ENCODE measurements at regions of chr1 and their contacts with region 1.

Region 1: DNA sequence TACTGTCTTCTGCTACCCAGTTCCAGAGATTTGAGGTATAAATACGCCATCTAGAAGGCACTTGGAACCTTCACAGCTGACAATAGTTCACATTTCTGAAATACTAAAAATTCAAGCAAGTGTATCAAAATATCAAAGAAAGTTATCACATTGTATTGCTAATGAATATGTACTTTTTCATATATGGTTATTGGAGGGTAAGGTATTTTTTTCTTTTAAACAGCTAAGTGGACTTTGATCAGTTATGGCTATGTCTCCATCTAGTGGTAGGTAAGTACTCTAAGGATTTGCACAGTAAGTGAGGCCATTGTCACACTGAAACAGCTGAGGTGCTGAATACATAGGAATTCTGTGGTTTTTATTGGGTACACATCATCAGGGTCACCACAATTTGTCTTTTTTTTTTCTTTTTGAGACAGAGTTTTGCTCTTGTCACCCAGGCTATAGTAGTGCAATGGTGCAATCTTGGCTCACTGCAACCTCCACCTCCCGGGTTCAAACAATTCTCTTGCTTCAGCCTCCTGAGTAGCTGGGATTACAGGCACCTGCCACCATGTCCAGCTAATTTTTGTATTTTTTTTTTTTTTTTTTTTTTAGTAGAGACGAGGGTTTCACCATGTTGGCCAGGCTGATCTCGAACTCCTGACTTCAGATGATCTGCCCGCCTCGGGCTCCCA is 49.1 kb upstream of the CR2 start:
- DNase-seq: no peak
- H3K4me3 Mint-ChIP-seq: no peak overlapping the region
- H3K27ac Mint-ChIP-seq: no peak overlapping the region
- H3K4me1 Mint-ChIP-seq: peaks cover 13% of the 10 kb centered on the region
- H3K27me3 Mint-ChIP-seq: no peaks in the 10 kb centered on the region

Region 2: DNA sequence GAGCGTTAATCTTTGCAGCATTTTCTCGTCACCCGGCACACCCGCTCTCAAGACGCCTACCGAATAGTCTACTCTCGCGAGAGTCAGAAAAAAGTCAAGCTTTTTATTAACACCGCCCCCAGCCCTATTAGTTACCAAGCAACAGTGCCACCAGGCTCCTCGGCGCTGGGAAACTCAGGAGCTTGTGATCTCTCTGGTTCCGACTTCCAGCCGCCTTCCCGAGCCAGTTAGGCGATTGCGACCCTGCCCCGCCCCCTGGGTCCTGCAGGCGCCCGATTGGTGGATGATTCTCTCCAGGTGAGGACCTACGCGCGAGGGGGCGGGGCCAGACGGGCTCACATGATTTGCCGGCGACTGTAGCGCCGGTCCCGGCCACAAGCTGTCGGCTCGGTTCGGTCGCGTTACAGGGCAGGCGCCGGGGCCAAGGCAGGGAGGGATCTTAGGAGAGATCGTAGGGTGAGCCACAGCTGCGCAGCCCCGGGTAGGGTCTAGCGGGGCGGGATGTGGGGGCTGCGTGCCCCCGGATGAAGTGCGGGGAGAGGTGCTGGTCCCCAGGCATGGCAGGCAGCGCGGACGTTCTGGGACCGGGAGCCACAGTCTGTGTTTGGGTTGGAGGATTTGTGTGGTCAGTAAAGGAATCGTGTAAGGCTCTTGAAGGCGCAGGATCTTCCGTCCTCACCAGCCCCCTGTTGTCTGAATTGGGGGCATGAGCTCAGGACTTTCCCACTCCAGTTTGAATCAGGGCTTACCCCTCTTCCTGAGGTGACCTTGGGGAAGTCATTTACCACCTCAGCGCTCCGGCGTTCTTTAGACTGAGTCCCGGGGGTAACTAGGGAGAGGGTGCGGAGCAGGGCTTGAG is 351.8 kb before region 1 on chr1 and contains the start of gene PFKFB2:
- CTCF ChIA-PET with region 1: interaction called, 6 read pairs
- intact Hi-C with region 1: loop called (anchors 1 kb)
- DNase-seq: peak; percentile 97
- H3K4me3 Mint-ChIP-seq: peak within 1 kb of the TSS; percentile 97
- H3K27ac Mint-ChIP-seq: peak within 1 kb of the TSS; percentile 68
- H3K4me1 Mint-ChIP-seq: peaks cover 36% of the 10 kb centered on the region
- H3K27me3 Mint-ChIP-seq: no peaks in the 10 kb centered on the region
- total RNA-seq, gene PFKFB2: 3.4 to 6.2 TPM

Region 3: GRCh38 chr1:207077470-207078377 is 327.3 kb before region 1 on chr1:
- CTCF ChIA-PET with region 1: interaction called, 70 read pairs
- intact Hi-C with region 1: no loop called
- DNase-seq: peak; percentile 82
- H3K4me3 Mint-ChIP-seq: no peak overlapping the region
- H3K27ac Mint-ChIP-seq: no peak overlapping the region
- H3K4me1 Mint-ChIP-seq: no peaks in the 10 kb centered on the region
- H3K27me3 Mint-ChIP-seq: no peaks in the 10 kb centered on the region

Region 4: DNA sequence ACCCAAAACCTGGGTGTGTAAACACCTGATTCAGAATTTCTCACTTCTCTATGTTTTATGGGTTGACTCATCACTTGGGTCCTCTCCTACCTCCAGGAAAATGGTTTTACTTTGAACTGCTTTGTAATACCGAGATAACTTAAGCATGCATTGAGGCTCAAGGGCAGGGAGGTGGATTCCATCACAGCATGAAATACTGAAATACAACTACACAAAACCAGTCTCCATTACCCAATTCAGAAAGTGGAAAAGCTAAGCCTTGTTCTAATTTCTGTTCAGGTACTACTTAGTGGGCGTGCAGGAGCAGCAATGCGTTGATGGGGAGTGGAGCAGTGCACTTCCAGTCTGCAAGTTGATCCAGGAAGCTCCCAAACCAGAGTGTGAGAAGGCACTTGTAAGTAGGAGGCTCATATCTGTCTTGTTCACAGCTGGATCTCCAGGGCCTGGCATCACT is 307.1 kb before region 1 on chr1:
- CTCF ChIA-PET with region 1: interaction called, 11 read pairs
- intact Hi-C with region 1: loop called (anchors 1 kb)
- DNase-seq: peak; percentile 65
- H3K4me3 Mint-ChIP-seq: no peak overlapping the region
- H3K27ac Mint-ChIP-seq: peak overlapping the region; percentile 86
- H3K4me1 Mint-ChIP-seq: peaks cover 9% of the 10 kb centered on the region
- H3K27me3 Mint-ChIP-seq: peaks cover 4% of the 10 kb centered on the region

Region 5: DNA sequence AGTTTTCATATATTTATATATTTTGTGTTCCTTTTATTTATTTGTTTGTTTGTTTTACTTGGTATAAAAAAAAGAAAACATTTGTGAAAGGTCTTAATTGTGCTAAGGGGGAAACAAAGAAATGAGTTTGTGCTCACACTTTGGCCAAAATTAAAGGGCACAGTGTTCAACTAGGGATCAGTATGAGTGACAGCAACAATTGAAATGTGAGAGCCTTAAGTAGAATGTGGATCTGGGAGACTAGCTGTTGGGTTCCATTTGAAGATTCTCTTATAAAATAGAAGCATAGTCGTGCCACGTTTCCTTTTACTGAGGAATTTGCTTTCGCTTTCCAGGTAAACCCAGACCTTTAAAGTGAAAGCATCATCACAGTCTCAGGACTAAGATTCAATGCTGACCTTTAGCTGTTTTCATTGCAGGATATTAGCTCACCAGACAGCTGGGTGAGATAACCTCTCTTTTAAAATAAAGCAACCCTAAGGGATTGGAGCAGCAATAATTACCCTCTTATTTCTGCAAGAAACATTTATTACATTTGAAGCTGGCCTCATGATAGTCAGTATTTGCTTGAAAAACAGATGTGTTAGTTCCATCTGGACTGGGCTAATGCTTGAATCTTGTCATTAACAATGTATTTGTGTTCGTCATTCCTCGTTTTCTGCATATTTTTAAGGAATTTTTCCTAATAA is 120.6 kb before region 1 on chr1:
- CTCF ChIA-PET with region 1: interaction called, 5 read pairs
- intact Hi-C with region 1: loop called (anchors 2 kb)
- DNase-seq: no peak
- H3K4me3 Mint-ChIP-seq: no peak overlapping the region
- H3K27ac Mint-ChIP-seq: no peak overlapping the region
- H3K4me1 Mint-ChIP-seq: peaks cover 38% of the 10 kb centered on the region
- H3K27me3 Mint-ChIP-seq: no peaks in the 10 kb centered on the region

Region 6: DNA sequence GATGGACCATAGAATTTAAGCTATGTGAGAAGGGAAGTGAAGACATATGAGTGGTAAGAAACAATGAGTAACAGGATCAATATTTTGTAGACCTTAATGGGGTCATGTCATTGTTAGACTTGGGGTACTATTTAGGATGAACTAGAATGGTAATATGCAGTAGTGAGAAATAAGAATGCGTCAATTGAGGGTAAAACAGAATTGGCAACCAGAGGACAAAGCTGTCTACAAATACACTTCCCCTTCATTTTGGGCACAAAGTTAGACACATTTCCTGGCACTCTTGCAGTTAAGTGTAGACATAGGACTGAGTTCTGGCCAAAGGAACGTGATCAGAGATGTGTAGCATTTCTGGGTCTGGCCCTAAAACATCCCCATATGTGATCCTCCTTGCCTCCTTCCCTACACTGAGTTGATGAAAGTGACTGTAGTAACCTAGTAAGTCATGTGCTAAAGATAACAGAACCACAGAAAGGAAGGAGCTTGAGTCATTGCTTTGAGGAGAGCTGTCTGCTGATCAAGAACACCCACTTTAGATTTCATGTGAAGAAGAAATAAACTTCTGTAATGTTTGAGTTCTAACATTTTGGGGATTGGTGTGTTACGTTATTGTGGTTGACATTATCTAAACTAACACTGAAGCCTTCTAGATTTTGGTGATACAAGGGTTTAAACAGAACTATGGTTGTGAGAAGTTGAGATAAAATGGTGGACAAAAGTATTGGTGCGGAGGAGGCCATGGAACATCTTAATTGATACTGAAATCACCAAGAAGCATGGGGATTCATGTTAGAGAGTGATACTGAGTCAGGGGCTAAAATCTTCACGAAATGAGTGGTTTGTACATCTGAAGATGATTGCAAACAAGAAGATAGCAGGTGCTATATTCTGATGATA is 41.8 kb before region 1 on chr1:
- CTCF ChIA-PET with region 1: interaction called, 4 read pairs
- intact Hi-C with region 1: loop called (anchors 1 kb)
- DNase-seq: peak; percentile 39
- H3K4me3 Mint-ChIP-seq: no peak overlapping the region
- H3K27ac Mint-ChIP-seq: no peak overlapping the region
- H3K4me1 Mint-ChIP-seq: peaks cover 5% of the 10 kb centered on the region
- H3K27me3 Mint-ChIP-seq: no peaks in the 10 kb centered on the region